Common myeloid progenitor, CD34-positive (primary cell): ENCODE measurements at regions of chr12 and their contacts with region 1.

Region 1: DNA sequence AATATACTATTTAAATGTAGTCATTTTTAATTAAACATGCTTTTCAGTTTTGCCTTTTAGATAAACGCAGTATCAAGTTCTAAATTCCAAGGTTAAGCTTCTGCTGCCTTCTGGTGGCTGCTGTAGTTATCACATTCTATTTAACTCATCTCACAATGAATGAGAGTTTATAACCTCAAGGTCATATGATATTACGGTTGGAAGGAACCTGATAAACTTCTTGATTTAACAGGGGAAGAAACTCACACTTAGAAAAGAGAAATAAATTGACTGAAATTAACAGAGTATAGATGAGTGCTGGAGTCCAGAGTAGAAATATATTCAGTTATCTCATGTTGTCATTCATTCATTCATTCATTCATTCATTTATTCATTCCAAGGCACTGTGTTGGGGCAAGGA is 31.9 kb downstream of the GUCY2C start:
- DNase-seq: peak; percentile 73 to 86 (median 84)
- H3K4me3 ChIP-seq: no peak overlapping the region
- H3K27ac ChIP-seq: no peak overlapping the region
- H3K4me1 ChIP-seq: peaks cover 0 to 2% (median 0%) of the 10 kb centered on the region in 4 experiments
- H3K27me3 ChIP-seq: peaks cover 0 to 15% (median 3%) of the 10 kb centered on the region in 5 experiments

Region 2: DNA sequence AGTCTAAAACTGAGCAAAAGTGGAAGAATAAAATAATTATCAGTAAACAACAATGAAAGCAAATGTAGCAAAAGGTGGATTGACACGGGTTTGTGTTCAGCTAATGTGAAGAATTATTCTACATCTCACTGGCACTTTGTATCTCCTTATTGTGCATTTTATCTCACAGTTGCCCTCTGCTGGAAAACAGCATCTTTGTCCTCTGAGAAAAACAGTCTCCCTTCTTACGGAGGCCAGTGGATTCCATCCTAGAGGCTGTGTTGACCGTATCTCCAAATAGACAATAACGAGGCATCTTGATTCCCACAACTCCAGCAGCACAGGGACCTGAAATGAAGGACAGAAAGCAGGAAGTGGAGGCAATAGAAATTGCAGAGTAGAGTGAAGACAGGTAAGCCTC is 45.5 kb before region 1 on chr12:
- CTCF ChIA-PET with region 1: interaction called, 10 read pairs
- POLR2A ChIA-PET with region 1: no interaction called
- DNase-seq: peak; percentile 31 to 53 (median 42)
- H3K4me3 ChIP-seq: no peak overlapping the region
- H3K27ac ChIP-seq: no peak overlapping the region
- H3K4me1 ChIP-seq: peaks cover 0 to 3% (median 1%) of the 10 kb centered on the region in 4 experiments
- H3K27me3 ChIP-seq: peaks cover 0 to 2% (median 0%) of the 10 kb centered on the region in 5 experiments